ENCODE measurements at regions of chr1 and their contacts with region 1.

Region 1: DNA sequence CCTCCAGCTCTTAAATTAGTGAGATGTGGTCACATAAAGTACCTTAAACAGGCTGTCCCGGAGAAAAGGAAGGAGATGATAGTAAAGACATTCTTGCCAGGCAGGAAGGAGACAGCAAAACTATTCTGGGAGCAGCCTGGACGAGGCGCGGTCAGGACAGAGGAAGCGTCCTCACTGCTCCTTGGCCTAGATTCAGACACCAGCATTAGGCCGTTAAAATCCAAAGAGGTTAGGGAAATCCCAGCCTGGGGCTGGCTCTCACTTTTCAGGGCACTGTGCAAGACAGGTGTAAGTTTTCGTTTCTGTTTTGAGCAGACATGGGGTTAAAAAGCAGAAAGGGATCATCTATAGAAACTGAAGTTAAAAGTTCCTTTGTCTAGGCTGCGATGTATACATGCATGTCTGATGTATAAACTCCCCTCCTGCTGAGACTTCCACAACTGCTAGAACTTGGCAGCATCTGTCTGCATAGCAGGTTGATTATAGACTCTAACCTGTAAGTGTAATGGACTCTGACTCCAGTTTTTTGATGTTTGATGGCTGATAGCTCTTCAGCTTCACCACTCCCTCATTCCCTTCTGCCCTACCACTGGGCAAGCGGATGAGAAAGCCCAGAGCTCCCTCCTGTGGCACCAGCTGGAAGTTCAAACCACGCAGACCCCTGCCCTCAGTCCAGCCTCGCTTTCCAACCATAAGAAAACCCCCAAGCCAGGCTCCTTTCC is 21.5 kb downstream of the STPG1 start:
- DNase-seq: peak; percentile 51
- ATAC-seq: peak; percentile 71
- H3K4me3 ChIP-seq: no peak overlapping the region
- H3K27ac ChIP-seq: no peak overlapping the region
- H3K4me1 ChIP-seq: peaks cover 6% of the 10 kb centered on the region
- H3K27me3 ChIP-seq: no peaks in the 10 kb centered on the region
- CTCF ChIP-seq: peak; percentile 77
- POLR2A ChIP-seq: no peak
- RAD21 ChIP-seq: peak; percentile 83

Region 2: GRCh38 chr1:24085546-24085945 is 306.5 kb before region 1 on chr1:
- CTCF ChIA-PET with region 1: no interaction called
- POLR2A ChIA-PET with region 1: no interaction called
- dilution Hi-C with region 1: no loop called
- in situ Hi-C with region 1: no loop called
- intact Hi-C with region 1: no loop called
- DNase-seq: peak; percentile 18
- ATAC-seq: no peak
- H3K4me3 ChIP-seq: no peak overlapping the region
- H3K27ac ChIP-seq: no peak overlapping the region
- H3K4me1 ChIP-seq: no peaks in the 10 kb centered on the region
- H3K27me3 ChIP-seq: peaks cover 62% of the 10 kb centered on the region
- CTCF ChIP-seq: no peak
- POLR2A ChIP-seq: no peak
- RAD21 ChIP-seq: no peak

Region 3: GRCh38 chr1:24150234-24151174 is 241.5 kb before region 1 on chr1:
- CTCF ChIA-PET with region 1: interaction called, 13 read pairs
- POLR2A ChIA-PET with region 1: no interaction called
- dilution Hi-C with region 1: no loop called
- in situ Hi-C with region 1: no loop called
- intact Hi-C with region 1: loop called (anchors 2 kb)
- DNase-seq: peak; percentile 67
- ATAC-seq: peak; percentile 99
- H3K4me3 ChIP-seq: no peak overlapping the region
- H3K27ac ChIP-seq: no peak overlapping the region
- H3K4me1 ChIP-seq: peaks cover 5% of the 10 kb centered on the region
- H3K27me3 ChIP-seq: peaks cover 54% of the 10 kb centered on the region
- CTCF ChIP-seq: peak; percentile 68
- POLR2A ChIP-seq: no peak
- RAD21 ChIP-seq: peak; percentile 48

Region 4: DNA sequence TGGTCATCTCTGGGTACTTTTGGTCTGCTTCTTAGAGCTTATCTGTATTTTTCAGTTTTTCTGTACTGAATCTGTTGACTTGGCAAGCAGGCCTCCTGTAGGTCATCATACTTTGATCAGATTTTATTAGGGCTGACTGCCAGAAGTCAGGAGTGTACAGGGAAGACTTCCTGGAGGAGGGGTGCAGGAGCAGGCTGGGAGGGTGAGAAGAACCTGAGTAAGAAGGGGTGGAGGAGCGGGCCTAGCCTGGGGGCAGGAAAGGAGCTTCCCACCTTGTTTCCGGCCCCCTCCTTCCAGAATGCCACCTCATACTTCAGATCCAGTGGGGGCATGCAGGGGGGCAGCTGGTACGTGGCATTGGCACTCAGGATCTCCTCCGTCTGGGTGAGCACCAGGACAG is 230.8 kb before region 1 on chr1:
- CTCF ChIA-PET with region 1: no interaction called
- POLR2A ChIA-PET with region 1: no interaction called
- dilution Hi-C with region 1: no loop called
- in situ Hi-C with region 1: no loop called
- intact Hi-C with region 1: no loop called
- DNase-seq: no peak
- ATAC-seq: no peak
- H3K4me3 ChIP-seq: no peak overlapping the region
- H3K27ac ChIP-seq: no peak overlapping the region
- H3K4me1 ChIP-seq: no peaks in the 10 kb centered on the region
- H3K27me3 ChIP-seq: peaks cover 69% of the 10 kb centered on the region
- CTCF ChIP-seq: no peak
- POLR2A ChIP-seq: no peak
- RAD21 ChIP-seq: no peak

Region 5: GRCh38 chr1:24351918-24352627 is 40.0 kb before region 1 on chr1:
- CTCF ChIA-PET with region 1: no interaction called
- POLR2A ChIA-PET with region 1: no interaction called
- dilution Hi-C with region 1: no loop called
- in situ Hi-C with region 1: no loop called
- intact Hi-C with region 1: no loop called
- DNase-seq: peak; percentile 73
- ATAC-seq: peak; percentile 66
- H3K4me3 ChIP-seq: no peak overlapping the region
- H3K27ac ChIP-seq: no peak overlapping the region
- H3K4me1 ChIP-seq: peaks cover 8% of the 10 kb centered on the region
- H3K27me3 ChIP-seq: peaks cover 3% of the 10 kb centered on the region; the same call in 1 of the 2 replicates
- CTCF ChIP-seq: no peak
- POLR2A ChIP-seq: no peak
- RAD21 ChIP-seq: no peak

Region 6: GRCh38 chr1:24513706-24514105 is 121.7 kb after region 1 on chr1:
- CTCF ChIA-PET with region 1: no interaction called
- POLR2A ChIA-PET with region 1: no interaction called
- dilution Hi-C with region 1: no loop called
- in situ Hi-C with region 1: no loop called
- intact Hi-C with region 1: no loop called
- DNase-seq: no peak
- ATAC-seq: no peak
- H3K4me3 ChIP-seq: no peak overlapping the region
- H3K27ac ChIP-seq: no peak overlapping the region
- H3K4me1 ChIP-seq: no peaks in the 10 kb centered on the region
- H3K27me3 ChIP-seq: no peaks in the 10 kb centered on the region
- CTCF ChIP-seq: no peak
- POLR2A ChIP-seq: no peak
- RAD21 ChIP-seq: no peak

Region 7: DNA sequence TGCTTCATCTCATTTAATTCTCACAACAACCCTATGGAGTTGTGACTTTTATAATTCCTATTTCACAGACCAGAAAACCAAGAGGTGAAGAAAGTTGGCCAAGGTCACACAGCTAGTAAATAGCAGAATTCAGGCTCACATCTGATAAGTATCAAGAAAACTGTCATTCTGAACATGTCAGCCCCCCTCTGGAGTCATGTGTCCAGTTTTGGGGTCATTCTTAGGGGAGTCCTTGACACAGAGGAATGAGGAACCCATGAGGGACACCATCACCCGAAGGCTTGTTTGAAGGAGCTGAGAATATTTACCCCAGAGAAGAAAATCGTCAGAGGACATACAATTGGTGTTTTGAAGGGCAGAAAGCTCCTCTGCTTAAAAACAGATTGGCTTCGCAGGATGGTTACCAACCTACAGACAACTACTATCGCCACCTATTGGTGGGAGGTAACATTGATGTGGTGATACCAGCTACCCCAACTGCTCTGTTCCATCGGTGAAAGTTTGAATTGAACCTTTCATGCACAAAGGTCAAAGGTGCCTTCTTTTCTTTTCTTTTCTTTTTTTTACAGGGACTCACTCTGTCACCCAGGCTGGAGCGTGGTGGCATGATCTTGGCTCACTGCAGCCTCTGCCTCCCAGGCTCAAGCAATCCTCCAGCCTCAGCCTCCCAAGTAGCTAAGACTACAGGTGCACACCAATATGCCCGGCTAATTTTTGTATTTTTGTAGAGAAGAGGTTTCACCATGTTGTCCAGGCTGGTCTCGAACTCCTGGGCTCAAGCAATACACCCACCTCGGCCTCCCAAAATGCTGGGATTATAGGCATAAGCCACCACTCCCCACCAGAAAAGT is 195.2 kb after region 1 on chr1:
- CTCF ChIA-PET with region 1: interaction called, 4 read pairs
- POLR2A ChIA-PET with region 1: no interaction called
- dilution Hi-C with region 1: no loop called
- in situ Hi-C with region 1: no loop called
- intact Hi-C with region 1: loop called (anchors 10 kb)
- DNase-seq: peak; percentile 63
- ATAC-seq: peak; percentile 92
- H3K4me3 ChIP-seq: no peak overlapping the region
- H3K27ac ChIP-seq: no peak overlapping the region
- H3K4me1 ChIP-seq: no peaks in the 10 kb centered on the region
- H3K27me3 ChIP-seq: peaks cover 45% of the 10 kb centered on the region
- CTCF ChIP-seq: peak; percentile 62
- POLR2A ChIP-seq: no peak
- RAD21 ChIP-seq: peak; percentile 64

Measured in IMR-90 (cell line).